ENCODE measurements at regions of chr4 and their contacts with region 1.

Region 1: GRCh38 chr4:1351854-1352633 is 5.0 kb downstream of the UVSSA start:
- DNase-seq: peak; percentile 78 to 96 (median 90)
- ATAC-seq: peak; percentile 30
- H3K4me3 ChIP-seq: no peak overlapping the region
- H3K4me3 Mint-ChIP-seq: no peak overlapping the region
- H3K27ac ChIP-seq: peak overlapping the region in 1 of 2 experiments; percentile 28
- H3K27ac Mint-ChIP-seq: peak overlapping the region; percentile 72
- H3K4me1 ChIP-seq: peaks cover 21% of the 10 kb centered on the region
- H3K4me1 Mint-ChIP-seq: peaks cover 33% of the 10 kb centered on the region
- H3K27me3 ChIP-seq: no peaks in the 10 kb centered on the region
- H3K27me3 Mint-ChIP-seq: no peaks in the 10 kb centered on the region
- CTCF ChIP-seq: peak; percentile 85

Region 2: GRCh38 chr4:1218634-1219565 is 133.1 kb before region 1 on chr4:
- CTCF ChIA-PET with region 1: no interaction called
- POLR2A ChIA-PET with region 1: no interaction called
- intact Hi-C with region 1: no loop called
- DNase-seq: no peak
- ATAC-seq: no peak
- H3K4me3 ChIP-seq: no peak overlapping the region
- H3K4me3 Mint-ChIP-seq: peak overlapping the region; percentile 18
- H3K27ac ChIP-seq: no peak overlapping the region
- H3K27ac Mint-ChIP-seq: peak overlapping the region; percentile 69
- H3K4me1 ChIP-seq: peaks cover 25% of the 10 kb centered on the region
- H3K4me1 Mint-ChIP-seq: peaks cover 43% of the 10 kb centered on the region
- H3K27me3 ChIP-seq: no peaks in the 10 kb centered on the region
- H3K27me3 Mint-ChIP-seq: no peaks in the 10 kb centered on the region
- CTCF ChIP-seq: no peak

Region 3: DNA sequence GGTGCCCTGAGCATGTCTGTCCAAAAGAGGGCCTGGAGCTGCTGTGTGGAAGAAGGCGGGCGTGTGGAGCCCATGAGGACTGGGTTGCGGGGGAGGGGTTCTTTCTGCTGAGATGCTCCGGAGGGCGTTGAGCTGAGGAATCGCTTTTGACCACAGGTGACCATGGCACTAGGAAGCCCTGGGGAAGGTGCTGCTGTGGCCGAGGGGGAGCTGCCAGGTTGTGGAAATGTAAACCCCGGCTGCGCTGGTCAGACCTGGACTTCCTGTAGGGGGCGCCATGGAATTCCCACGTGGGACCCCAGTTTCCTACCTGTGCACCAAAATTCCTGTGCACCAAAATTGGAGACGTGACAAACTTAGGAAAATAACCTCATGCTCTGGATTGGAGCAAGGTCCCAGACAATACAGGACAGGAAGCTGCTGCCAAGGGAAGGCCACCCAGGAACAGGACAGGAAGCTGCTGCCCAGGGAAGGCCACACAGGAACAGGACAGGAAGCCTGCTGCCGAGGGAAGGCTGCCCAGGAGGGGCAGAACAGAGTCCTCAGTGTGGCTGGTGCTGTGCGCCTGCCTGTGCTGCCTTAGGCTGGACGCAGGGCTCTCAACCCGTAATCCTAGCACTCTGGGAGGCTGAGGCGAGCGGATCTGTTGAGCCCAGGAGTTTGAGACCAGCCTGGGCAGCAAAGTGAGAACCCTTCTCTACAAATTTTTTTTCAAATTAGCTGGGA is 33.4 kb before region 1 on chr4:
- CTCF ChIA-PET with region 1: interaction called, 5 read pairs
- POLR2A ChIA-PET with region 1: no interaction called
- intact Hi-C with region 1: loop called (anchors 1 kb)
- DNase-seq: peak in 6 of 9 experiments; percentile 20 to 63 (median 44)
- ATAC-seq: no peak
- H3K4me3 ChIP-seq: no peak overlapping the region
- H3K4me3 Mint-ChIP-seq: no peak overlapping the region
- H3K27ac ChIP-seq: no peak overlapping the region
- H3K27ac Mint-ChIP-seq: no peak overlapping the region
- H3K4me1 ChIP-seq: peaks cover 8% of the 10 kb centered on the region
- H3K4me1 Mint-ChIP-seq: peaks cover 13% of the 10 kb centered on the region
- H3K27me3 ChIP-seq: no peaks in the 10 kb centered on the region
- H3K27me3 Mint-ChIP-seq: no peaks in the 10 kb centered on the region
- CTCF ChIP-seq: peak; percentile 36

Region 4: DNA sequence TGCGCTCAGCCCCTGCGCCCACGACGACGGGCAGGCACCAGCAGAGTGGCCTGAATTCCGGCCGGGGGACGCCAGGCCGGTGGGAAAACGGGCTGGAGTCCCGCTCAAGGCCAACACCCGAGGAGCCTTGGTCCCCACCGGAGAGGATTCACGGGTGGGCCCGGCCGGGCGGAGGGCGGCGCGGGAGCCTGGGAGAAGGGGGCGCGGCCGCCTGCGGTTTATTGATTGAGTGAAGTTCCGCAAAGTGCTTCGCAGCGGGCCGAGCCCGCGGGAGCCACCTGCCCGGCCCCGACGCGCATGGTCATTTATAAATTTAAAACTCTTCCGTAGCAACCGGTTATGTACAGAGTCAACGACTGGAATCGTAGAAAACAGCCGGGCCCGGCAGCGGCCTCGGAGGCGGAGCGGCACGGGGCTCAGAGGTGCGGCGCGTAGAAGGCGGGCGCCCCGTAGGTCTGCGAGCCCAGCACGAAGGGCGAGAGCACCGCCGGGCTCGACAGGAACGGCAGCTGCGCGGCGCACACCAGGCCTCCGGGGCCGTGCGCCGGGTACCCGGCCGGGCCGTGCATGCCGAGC is 50.6 kb after region 1 on chr4:
- CTCF ChIA-PET with region 1: no interaction called
- POLR2A ChIA-PET with region 1: no interaction called
- intact Hi-C with region 1: no loop called
- DNase-seq: peak in 2 of 9 experiments; percentile 2 to 32
- ATAC-seq: no peak
- H3K4me3 ChIP-seq: no peak overlapping the region
- H3K4me3 Mint-ChIP-seq: no peak overlapping the region
- H3K27ac ChIP-seq: no peak overlapping the region
- H3K27ac Mint-ChIP-seq: no peak overlapping the region
- H3K4me1 ChIP-seq: peaks cover 6% of the 10 kb centered on the region
- H3K4me1 Mint-ChIP-seq: peaks cover 1% of the 10 kb centered on the region
- H3K27me3 ChIP-seq: peaks cover 4 to 14% of the 10 kb centered on the region in 2 experiments
- H3K27me3 Mint-ChIP-seq: peaks cover 17% of the 10 kb centered on the region
- CTCF ChIP-seq: no peak

Region 5: GRCh38 chr4:1870578-1871443 is 518.8 kb after region 1 on chr4 and contains the start of gene NSD2:
- CTCF ChIA-PET with region 1: no interaction called
- POLR2A ChIA-PET with region 1: no interaction called
- intact Hi-C with region 1: loop called (anchors 5 kb)
- DNase-seq: peak; percentile 81 to 97 (median 88)
- ATAC-seq: peak; percentile 64
- H3K4me3 ChIP-seq: peak within 1 kb of the TSS; percentile 66 to 98
- H3K4me3 Mint-ChIP-seq: peak within 1 kb of the TSS; percentile 83
- H3K27ac ChIP-seq: peak within 1 kb of the TSS; percentile 81 to 98
- H3K27ac Mint-ChIP-seq: peak within 1 kb of the TSS; percentile 89
- H3K4me1 ChIP-seq: peaks cover 21% of the 10 kb centered on the region
- H3K4me1 Mint-ChIP-seq: peaks cover 31% of the 10 kb centered on the region
- H3K27me3 ChIP-seq: no peaks in the 10 kb centered on the region
- H3K27me3 Mint-ChIP-seq: no peaks in the 10 kb centered on the region
- CTCF ChIP-seq: no peak
- total RNA-seq, gene NSD2: 27.3 to 32.5 TPM

Region 6: DNA sequence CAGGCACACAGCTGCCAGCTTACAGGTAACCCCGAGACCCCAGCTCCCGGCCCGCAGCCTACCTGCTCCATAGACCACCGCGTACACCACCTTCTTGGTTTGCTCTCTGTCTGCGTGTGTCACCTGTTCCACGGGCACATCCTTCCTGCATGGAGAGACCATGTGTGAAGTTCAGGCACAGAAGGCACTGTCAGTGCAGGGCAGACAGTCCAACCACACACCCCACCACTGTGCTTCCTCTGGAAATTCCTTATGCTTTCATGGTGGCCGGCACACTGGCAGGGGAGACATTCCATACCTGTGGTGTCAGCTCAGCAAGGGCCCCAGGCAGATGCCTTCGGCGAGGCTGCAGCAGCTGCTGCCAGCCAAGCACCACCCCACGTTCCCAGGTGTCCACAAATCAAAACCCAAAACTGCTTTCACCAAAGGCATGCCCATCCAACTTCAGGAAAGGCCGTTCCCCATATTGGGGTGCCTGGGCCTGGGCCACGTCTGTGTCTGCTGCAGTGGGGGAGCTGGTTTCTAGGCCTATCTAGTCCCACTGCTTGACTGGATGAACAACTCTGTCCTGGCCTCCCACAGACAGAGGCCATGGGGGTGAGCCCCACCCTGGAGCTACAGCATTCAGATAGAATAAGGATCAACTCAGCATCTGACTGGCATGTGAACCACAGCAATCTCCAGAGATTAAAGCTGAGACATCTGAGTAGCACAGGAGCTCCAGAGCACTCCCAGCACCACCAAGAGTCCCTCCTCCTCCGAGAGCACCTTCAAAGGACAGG is 743.9 kb after region 1 on chr4:
- CTCF ChIA-PET with region 1: no interaction called
- POLR2A ChIA-PET with region 1: no interaction called
- intact Hi-C with region 1: no loop called
- DNase-seq: no peak
- ATAC-seq: no peak
- H3K4me3 ChIP-seq: no peak overlapping the region
- H3K4me3 Mint-ChIP-seq: no peak overlapping the region
- H3K27ac ChIP-seq: no peak overlapping the region
- H3K27ac Mint-ChIP-seq: no peak overlapping the region
- H3K4me1 ChIP-seq: no peaks in the 10 kb centered on the region
- H3K4me1 Mint-ChIP-seq: no peaks in the 10 kb centered on the region
- H3K27me3 ChIP-seq: no peaks in the 10 kb centered on the region
- H3K27me3 Mint-ChIP-seq: peaks cover 5% of the 10 kb centered on the region
- CTCF ChIP-seq: no peak